Activated T-helper 1 cell treated with anti-CD3 and anti-CD28 coated beads, Interleukin-12 subunit alpha, Interleukin-12 subunit beta, Interleukin-2, Interleukin-4 antibody, amounts not matched to agents 30 ng/mL and 10 ng/mL and 1 ng/mL, durations not matched to agents 14 hours and 24 hours and 36 hours (primary cell): ENCODE measurements at regions of chr16 and their contacts with region 1.

Region 1: GRCh38 chr16:86007524-86007923 is 108.6 kb downstream of the IRF8 start:
- DNase-seq: no peak
- H3K4me3 Mint-ChIP-seq: no peak overlapping the region
- H3K27ac Mint-ChIP-seq: no peak overlapping the region
- H3K4me1 Mint-ChIP-seq: peaks cover 17% of the 10 kb centered on the region
- H3K27me3 Mint-ChIP-seq: no peaks in the 10 kb centered on the region

Region 2: DNA sequence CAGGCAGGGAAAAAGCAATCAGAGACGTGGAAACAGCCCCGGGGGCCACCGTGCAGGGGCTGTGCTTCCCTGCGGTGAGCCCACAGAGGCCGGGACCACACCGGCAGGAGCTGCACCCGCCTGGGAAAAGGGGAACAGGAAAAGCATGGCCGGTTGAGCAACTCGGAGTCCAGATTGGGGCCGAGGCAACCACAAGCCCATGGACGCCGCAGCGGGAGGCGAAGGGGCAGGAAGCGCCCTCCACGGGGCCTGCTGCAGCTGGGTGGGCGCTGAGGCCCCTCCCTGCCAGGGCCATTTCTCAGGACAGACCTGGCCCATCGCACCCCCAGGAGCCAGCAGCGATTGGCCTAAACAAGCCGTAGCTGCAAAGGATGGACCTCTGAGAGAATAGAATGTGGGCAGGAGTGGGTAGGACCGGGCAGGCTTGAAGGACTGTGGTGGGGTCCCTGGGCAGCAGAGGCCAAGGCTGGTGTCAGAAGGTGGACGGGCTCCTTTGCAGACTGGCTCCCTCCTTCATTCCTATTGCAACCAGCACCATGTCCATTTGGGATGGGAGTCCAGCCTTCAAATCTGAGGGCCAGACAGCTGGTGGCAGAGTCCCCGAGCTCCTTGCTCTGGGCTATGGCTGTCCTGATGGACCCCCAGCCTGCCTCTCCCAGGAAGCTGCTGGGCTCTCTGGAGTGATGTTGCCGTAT is 177.6 kb before region 1 on chr16:
- intact Hi-C with region 1: no loop called
- DNase-seq: no peak
- H3K4me3 Mint-ChIP-seq: no peak overlapping the region
- H3K27ac Mint-ChIP-seq: no peak overlapping the region
- H3K4me1 Mint-ChIP-seq: peaks cover 7% of the 10 kb centered on the region
- H3K27me3 Mint-ChIP-seq: peaks cover 24% of the 10 kb centered on the region

Region 3: DNA sequence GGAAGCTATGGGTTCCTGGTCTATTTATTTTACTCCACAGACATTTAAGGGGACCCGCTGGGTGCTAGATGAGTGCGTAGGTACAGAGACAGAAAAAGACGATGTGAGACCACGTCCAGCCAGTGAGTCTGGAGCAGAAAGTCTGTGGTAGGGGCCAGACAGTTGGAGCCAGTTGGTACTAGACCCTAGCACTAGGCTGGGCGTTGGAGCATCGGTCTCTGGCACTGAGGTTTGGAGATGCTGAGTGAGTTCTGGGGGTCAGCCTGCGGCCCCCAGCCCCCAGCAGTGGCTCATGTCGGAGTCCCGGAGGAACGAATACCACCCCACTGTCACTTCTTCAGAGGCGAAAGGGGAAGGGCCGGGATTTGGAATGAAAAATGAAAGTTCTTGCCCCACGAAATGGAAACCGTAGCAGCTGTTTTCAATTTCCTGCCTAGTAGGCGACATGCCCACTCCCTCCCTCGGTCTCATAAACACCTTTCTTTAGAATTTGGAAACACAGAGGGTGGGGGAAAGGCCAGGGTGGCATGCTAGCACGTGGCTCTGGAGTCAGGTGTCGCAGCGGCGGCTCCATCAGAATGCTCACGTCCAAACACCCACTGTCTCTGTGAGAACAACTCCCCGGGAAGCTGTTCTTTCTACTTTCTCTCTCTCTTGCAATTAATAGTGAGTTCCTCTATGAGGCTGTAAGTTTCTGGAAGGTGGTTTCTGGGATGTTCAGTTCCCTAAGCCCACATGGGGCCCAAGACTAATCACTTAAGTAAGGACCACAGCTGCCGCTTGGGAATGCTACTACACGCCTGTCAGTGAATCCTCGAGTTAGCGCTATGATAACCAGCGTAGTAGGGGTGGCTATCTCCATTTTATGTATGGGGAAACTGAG is 11.7 kb before region 1 on chr16:
- intact Hi-C with region 1: loop called (anchors 1 kb)
- DNase-seq: no peak
- H3K4me3 Mint-ChIP-seq: peak overlapping the region; percentile 43
- H3K27ac Mint-ChIP-seq: peak overlapping the region; percentile 13
- H3K4me1 Mint-ChIP-seq: peaks cover 35% of the 10 kb centered on the region
- H3K27me3 Mint-ChIP-seq: no peaks in the 10 kb centered on the region